HCT116 (cell line): ENCODE measurements at regions of chr1 and their contacts with region 1.

Region 1: GRCh38 chr1:43934101-43934985 is 742 bp downstream of the ARTN start:
- DNase-seq: peak; percentile 68
- ATAC-seq: peak; percentile 74
- H3K4me3 ChIP-seq: peak overlapping the region; percentile 75 to 77
- H3K27ac ChIP-seq: peak overlapping the region; percentile 71
- H3K4me1 ChIP-seq: peaks cover 31 to 63% of the 10 kb centered on the region in 2 experiments
- H3K27me3 ChIP-seq: no peaks in the 10 kb centered on the region
- CTCF ChIP-seq: peak in 2 of 3 experiments; percentile 91 to 96; a peak in 4 of 6 replicates
- POLR2A ChIP-seq: peak; percentile 12
- RAD21 ChIP-seq: no peak

Region 2: DNA sequence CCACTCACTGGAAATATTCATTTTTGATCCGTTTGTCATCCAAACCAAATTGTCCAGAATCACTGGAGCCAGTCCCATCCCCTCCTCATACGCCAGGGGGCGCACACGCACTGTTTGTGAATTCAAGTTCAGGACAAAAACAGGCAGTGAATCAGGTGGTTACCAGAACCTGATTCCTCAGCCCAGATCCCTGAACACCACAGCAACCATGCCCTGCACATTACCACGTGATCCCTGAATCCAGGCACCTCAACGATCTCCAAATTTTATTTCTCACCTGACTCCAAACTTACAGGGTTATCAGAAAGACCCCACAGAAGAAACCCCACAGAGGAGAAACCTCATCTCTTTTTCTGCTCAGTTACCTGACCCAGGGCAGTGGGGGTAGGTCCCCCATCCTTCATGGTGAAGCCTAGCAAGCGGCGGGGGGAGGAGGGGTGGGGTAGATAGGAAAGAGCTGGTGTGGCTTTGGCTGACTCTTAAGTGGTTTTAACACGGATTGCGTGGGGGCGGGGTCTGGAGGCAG is 405.1 kb before region 1 on chr1:
- CTCF ChIA-PET with region 1: interaction called, 26 read pairs
- POLR2A ChIA-PET with region 1: interaction called, 6 read pairs
- RAD21 ChIA-PET with region 1: interaction called in 1 of 2 experiments, 6 read pairs
- intact Hi-C with region 1: loop called (anchors 5 kb)
- DNase-seq: peak; percentile 84
- ATAC-seq: peak; percentile 56
- H3K4me3 ChIP-seq: no peak overlapping the region
- H3K27ac ChIP-seq: no peak overlapping the region
- H3K4me1 ChIP-seq: peaks cover 26 to 71% of the 10 kb centered on the region in 2 experiments
- H3K27me3 ChIP-seq: no peaks in the 10 kb centered on the region
- CTCF ChIP-seq: peak in 2 of 3 experiments; percentile 94 to 97; a peak in 4 of 6 replicates
- POLR2A ChIP-seq: no peak
- RAD21 ChIP-seq: no peak

Region 3: GRCh38 chr1:43750083-43750482 is 184.3 kb before region 1 on chr1:
- CTCF ChIA-PET with region 1: interaction called, 10 read pairs
- POLR2A ChIA-PET with region 1: no interaction called
- RAD21 ChIA-PET with region 1: no interaction called
- intact Hi-C with region 1: no loop called
- DNase-seq: no peak
- ATAC-seq: no peak
- H3K4me3 ChIP-seq: no peak overlapping the region
- H3K27ac ChIP-seq: no peak overlapping the region
- H3K4me1 ChIP-seq: peaks cover 0 to 4% of the 10 kb centered on the region in 2 experiments; a peak in 1 of 4 replicates
- H3K27me3 ChIP-seq: no peaks in the 10 kb centered on the region
- CTCF ChIP-seq: no peak
- POLR2A ChIP-seq: no peak
- RAD21 ChIP-seq: no peak

Region 4: GRCh38 chr1:43783671-43784205 is 150.6 kb before region 1 on chr1:
- CTCF ChIA-PET with region 1: interaction called, 19 read pairs
- POLR2A ChIA-PET with region 1: interaction called, 4 read pairs
- RAD21 ChIA-PET with region 1: interaction called in 1 of 2 experiments, 4 read pairs
- intact Hi-C with region 1: no loop called
- DNase-seq: peak; percentile 71
- ATAC-seq: peak; percentile 87
- H3K4me3 ChIP-seq: peak overlapping the region in 1 of 2 experiments; percentile 37; a peak in 3 of 4 replicates
- H3K27ac ChIP-seq: peak overlapping the region; percentile 59
- H3K4me1 ChIP-seq: peaks cover 23 to 54% of the 10 kb centered on the region in 2 experiments
- H3K27me3 ChIP-seq: no peaks in the 10 kb centered on the region
- CTCF ChIP-seq: no peak
- POLR2A ChIP-seq: no peak
- RAD21 ChIP-seq: peak; percentile 36

Region 5: DNA sequence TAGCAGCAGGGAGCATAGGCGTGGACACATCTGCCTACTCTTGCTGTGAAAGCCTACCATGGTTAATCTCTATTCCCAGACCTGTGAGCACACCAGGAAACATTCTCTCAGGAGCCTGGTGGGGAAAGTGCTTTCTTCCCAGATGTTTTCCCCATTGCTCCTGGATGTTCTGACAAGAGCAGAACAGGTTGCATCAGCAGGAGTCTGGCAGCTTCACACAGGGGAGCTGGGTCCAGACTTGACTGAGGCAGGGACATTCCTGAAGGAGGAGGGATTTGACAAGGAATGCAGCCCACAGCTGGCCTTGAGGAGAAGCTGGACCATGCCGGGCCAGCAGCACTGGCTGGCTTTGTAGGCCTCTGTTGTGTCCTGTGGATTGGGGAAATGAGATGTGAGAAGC is 21.7 kb before region 1 on chr1:
- CTCF ChIA-PET with region 1: interaction called, 21 read pairs
- POLR2A ChIA-PET with region 1: interaction called, 8 read pairs
- RAD21 ChIA-PET with region 1: no interaction called
- intact Hi-C with region 1: loop called (anchors 1 kb)
- DNase-seq: no peak
- ATAC-seq: peak; percentile 29; the same call in 1 of the 2 replicates
- H3K4me3 ChIP-seq: no peak overlapping the region
- H3K27ac ChIP-seq: no peak overlapping the region
- H3K4me1 ChIP-seq: peaks cover 0 to 33% of the 10 kb centered on the region in 2 experiments; a peak in 2 of 4 replicates
- H3K27me3 ChIP-seq: no peaks in the 10 kb centered on the region
- CTCF ChIP-seq: no peak
- POLR2A ChIP-seq: no peak
- RAD21 ChIP-seq: no peak

Region 6: GRCh38 chr1:44049839-44050238 is 115.5 kb after region 1 on chr1:
- CTCF ChIA-PET with region 1: interaction called, 30 read pairs
- POLR2A ChIA-PET with region 1: interaction called, 3 read pairs
- RAD21 ChIA-PET with region 1: interaction called in 1 of 2 experiments, 4 read pairs
- intact Hi-C with region 1: loop called (anchors 5 kb)
- DNase-seq: no peak
- ATAC-seq: no peak
- H3K4me3 ChIP-seq: no peak overlapping the region
- H3K27ac ChIP-seq: no peak overlapping the region
- H3K4me1 ChIP-seq: peaks cover 2 to 7% of the 10 kb centered on the region in 2 experiments; a peak in 2 of 4 replicates
- H3K27me3 ChIP-seq: no peaks in the 10 kb centered on the region
- CTCF ChIP-seq: no peak
- POLR2A ChIP-seq: no peak
- RAD21 ChIP-seq: no peak